Cardiac septum (tissue), 1 donor: ENCODE measurements at regions of chr20 and their contacts with region 1.

Region 1: GRCh38 chr20:60210779-60211617 is 252.8 kb downstream of the CDH26 start:
- DNase-seq: peak; percentile 89

Region 2: GRCh38 chr20:60024801-60025200 is 186.2 kb before region 1 on chr20:
- intact Hi-C with region 1: no loop called
- DNase-seq: no peak

Region 3: GRCh38 chr20:60062811-60063451 is 148.1 kb before region 1 on chr20:
- intact Hi-C with region 1: loop called (anchors 5 kb)
- DNase-seq: no peak

Region 4: GRCh38 chr20:60137629-60138245 is 73.3 kb before region 1 on chr20:
- intact Hi-C with region 1: loop called (anchors 5 kb)
- DNase-seq: no peak

Region 5: GRCh38 chr20:61120595-61121515 is 909.9 kb after region 1 on chr20:
- intact Hi-C with region 1: loop called (anchors 5 kb)
- DNase-seq: peak; percentile 27

Region 6: DNA sequence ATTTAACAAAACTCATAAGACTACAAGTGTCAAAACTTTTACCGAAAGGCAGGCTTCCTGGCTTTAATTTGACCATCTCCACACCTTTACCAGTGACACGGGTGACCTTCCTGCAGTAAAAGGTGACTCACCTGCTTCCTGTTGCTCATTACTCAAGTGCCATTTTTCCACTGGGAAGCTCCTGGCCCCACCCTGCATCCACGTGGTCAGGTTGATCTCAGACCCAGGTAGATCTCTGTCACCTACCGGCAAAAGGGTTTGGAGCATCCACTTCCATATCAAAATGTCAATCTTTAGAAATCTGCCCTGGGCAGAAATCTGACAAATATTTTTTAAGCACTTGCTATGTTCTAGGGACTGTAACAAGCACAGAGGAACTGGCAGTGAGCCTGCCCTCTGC is 1009.2 kb after region 1 on chr20:
- intact Hi-C with region 1: loop called (anchors 10 kb)
- DNase-seq: no peak

Region 7: DNA sequence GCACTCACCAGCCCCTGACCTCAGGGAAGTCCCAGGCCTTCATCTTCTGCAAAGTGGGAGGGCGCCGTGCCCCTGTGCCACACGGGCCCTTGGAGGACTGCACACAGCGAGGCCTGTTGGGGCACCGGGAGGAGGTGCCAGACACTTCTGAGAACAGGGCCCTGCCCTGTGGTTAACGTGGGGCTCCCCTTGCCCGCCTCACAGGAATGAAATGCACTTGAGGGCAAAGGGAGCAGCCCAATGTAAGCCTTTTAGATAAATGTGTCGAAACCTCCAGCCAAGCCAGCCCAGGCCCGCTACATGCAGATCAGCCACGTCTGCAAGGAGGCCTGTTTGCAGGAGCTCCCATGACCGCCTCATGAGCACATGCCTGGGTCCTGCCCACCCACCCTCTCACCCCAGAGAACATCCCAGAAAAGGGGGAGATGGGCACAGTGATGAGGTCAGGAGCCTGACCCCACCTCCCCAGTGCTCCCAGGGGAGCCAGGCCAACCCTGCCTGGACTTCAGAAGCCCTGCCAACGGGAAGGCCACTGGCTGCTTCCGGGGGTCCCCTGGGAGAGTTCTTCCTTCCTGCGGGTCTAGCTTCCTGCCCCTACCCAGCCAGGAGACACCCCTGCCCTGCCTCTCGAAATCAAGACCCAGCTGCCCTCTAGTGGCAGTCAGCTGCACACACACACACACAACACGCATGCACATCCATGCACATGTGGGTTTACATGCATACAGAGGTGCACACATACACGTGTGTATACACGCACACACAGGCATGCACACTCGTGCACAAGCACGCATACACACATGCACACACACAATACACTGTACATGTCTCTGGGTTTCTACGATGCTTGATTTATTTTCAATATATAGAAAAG is 1676.0 kb after region 1 on chr20:
- intact Hi-C with region 1: loop called (anchors 5 kb)
- DNase-seq: no peak